SK-N-SH (cell line): ENCODE measurements at regions of chrX and their contacts with region 1.

Region 1: DNA sequence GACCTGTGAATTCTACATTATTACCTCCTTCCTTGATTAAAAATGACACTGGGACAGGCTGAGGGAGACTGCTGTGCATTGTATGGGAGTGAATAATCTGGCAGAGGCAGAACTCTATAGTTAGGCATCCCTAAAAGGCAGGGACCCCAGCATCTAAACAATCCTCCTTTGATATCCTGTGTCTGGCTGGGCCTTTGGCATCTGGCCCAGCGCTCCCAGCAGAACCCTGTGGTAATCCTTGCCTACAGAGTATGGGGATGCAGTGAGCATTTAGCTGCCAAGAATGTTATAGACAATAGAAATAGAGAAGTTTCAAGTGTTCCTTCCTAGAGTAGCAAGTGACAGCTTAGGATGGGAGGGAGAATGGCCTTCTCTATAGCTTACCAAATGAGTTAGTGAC is 38.5 kb downstream of the ZCCHC12 start:
- DNase-seq: no peak
- H3K4me3 ChIP-seq: no peak overlapping the region
- H3K27ac ChIP-seq: no peak overlapping the region
- H3K4me1 ChIP-seq: no peaks in the 10 kb centered on the region; a peak in 1 of 4 replicates
- H3K27me3 ChIP-seq: peaks cover 5% of the 10 kb centered on the region
- CTCF ChIP-seq: no peak
- EP300 ChIP-seq: no peak
- RAD21 ChIP-seq: no peak

Region 2: DNA sequence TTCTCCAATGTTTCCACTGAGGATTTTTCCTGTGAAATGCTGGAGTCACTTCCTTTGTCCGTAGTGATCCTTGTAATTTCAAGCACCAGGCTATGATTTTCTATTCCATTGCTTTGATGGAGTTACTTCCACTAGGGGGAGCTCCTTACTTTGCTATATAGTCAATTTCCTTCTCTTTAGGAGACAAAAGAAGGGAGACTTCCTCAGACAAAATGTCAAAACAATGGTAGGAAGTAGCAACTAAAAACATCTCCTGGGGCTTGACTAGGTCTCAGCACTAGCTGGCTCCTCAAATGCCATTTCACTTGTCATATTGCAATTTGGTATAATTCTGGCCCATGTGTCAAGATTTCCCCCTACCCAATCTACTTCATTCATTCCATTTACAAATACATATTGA is 14.4 kb before region 1 on chrX:
- CTCF ChIA-PET with region 1: interaction called, 10 read pairs
- POLR2A ChIA-PET with region 1: no interaction called
- DNase-seq: peak; percentile 61
- H3K4me3 ChIP-seq: no peak overlapping the region; a peak in 1 of 4 replicates
- H3K27ac ChIP-seq: no peak overlapping the region
- H3K4me1 ChIP-seq: no peaks in the 10 kb centered on the region
- H3K27me3 ChIP-seq: no peaks in the 10 kb centered on the region; the same call in 1 of the 2 replicates
- CTCF ChIP-seq: peak; percentile 83
- EP300 ChIP-seq: no peak
- RAD21 ChIP-seq: peak; percentile 76